Activated CD4-positive, alpha-beta T cell treated with anti-CD3 and anti-CD28 coated beads, Interleukin-2, amount 10 ng/mL, durations not matched to agents 24 days and 14 days (primary cell): ENCODE measurements at regions of chr13 and their contacts with region 1.

Region 1: GRCh38 chr13:99356158-99357091 is 49.2 kb upstream of the GPR183 start:
- DNase-seq: peak; percentile 94
- H3K4me3 Mint-ChIP-seq: peak overlapping the region; percentile 83
- H3K27ac Mint-ChIP-seq: peak overlapping the region; percentile 99
- H3K4me1 Mint-ChIP-seq: peaks cover 92% of the 10 kb centered on the region
- H3K27me3 Mint-ChIP-seq: no peaks in the 10 kb centered on the region

Region 2: GRCh38 chr13:98606296-98606695 is 750.1 kb before region 1 on chr13:
- intact Hi-C with region 1: no loop called
- DNase-seq: no peak
- H3K4me3 Mint-ChIP-seq: no peak overlapping the region
- H3K27ac Mint-ChIP-seq: no peak overlapping the region
- H3K4me1 Mint-ChIP-seq: no peaks in the 10 kb centered on the region
- H3K27me3 Mint-ChIP-seq: peaks cover 7% of the 10 kb centered on the region

Region 3: DNA sequence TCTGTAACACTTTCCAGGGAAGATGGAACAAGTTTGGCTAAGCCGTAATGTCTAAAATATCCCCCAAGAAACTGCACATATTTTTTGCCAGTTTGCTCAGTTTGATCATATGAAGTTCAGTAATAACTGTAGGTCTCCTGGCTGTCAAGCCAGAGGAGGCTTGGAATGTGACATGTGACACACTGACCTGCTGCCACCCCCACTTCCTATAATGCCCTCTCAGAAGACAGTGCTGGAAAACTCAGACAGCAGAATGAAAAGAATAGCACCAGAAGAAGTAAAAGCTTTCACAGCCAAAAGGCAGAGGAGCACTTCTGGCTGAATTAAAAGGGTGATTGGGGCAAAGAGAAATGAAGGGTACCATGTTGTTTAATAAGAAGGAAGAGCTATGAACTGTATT is 223.2 kb before region 1 on chr13:
- intact Hi-C with region 1: no loop called
- DNase-seq: no peak
- H3K4me3 Mint-ChIP-seq: no peak overlapping the region
- H3K27ac Mint-ChIP-seq: no peak overlapping the region
- H3K4me1 Mint-ChIP-seq: no peaks in the 10 kb centered on the region
- H3K27me3 Mint-ChIP-seq: peaks cover 10% of the 10 kb centered on the region

Region 4: GRCh38 chr13:99200432-99201167 is 155.8 kb before region 1 on chr13 and contains the start of gene UBAC2:
- intact Hi-C with region 1: loop called (anchors 2 kb)
- DNase-seq: peak; percentile 99
- H3K4me3 Mint-ChIP-seq: peak within 1 kb of the TSS; percentile 97
- H3K27ac Mint-ChIP-seq: peak within 1 kb of the TSS; percentile 97
- H3K4me1 Mint-ChIP-seq: peaks cover 46% of the 10 kb centered on the region
- H3K27me3 Mint-ChIP-seq: no peaks in the 10 kb centered on the region
- total RNA-seq, gene UBAC2: 52.6 and 52.8 TPM in 2 replicates

Region 5: DNA sequence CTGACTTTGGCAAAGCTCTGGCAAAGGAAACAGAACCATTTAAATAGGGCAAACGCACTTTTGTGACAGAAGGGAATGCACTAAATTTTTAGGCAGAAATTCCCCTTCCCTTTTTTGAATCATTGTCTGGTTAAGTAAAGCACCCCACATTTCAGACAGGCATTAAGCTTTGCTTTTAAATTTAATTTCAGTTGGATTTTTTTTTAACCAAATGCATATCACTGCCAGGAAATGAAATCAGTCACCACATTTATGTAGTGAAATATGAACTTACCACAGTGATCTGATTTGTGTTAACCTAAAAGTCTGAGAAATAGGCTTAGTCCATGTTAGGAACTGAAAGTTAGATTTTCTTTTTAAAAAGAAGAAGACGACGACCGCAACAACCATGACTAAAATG is 60.0 kb before region 1 on chr13:
- intact Hi-C with region 1: loop called (anchors 2 kb)
- DNase-seq: no peak
- H3K4me3 Mint-ChIP-seq: peak overlapping the region; percentile 68
- H3K27ac Mint-ChIP-seq: peak overlapping the region; percentile 79
- H3K4me1 Mint-ChIP-seq: peaks cover 58% of the 10 kb centered on the region
- H3K27me3 Mint-ChIP-seq: no peaks in the 10 kb centered on the region

Region 6: DNA sequence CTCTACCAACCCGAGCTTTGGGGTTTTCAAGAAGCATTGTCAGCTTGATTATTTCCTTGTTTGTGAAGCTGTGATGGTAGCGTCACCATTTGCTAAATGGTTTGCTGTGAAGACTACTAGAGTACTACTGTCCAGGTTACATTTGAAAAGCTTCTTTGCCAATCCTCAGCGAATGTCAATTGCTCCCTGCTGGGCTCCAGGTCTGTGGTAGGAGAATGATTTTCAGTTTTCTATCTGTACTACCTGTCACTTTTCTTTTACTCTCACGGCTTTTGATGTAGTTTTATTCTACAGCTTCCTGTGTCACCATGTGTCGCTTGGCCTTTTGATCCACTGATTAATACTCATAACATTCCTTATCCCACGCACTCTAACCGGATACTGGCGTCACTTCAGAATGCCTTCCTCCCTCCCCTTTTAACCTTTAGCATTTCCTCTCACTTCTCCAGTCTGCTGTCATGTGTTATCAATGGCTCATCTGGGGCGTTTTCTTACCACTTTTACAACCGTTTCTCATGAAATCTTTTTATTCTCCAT is 41.7 kb before region 1 on chr13:
- intact Hi-C with region 1: loop called (anchors 2 kb)
- DNase-seq: peak; percentile 89
- H3K4me3 Mint-ChIP-seq: peak overlapping the region; percentile 76
- H3K27ac Mint-ChIP-seq: peak overlapping the region; percentile 94
- H3K4me1 Mint-ChIP-seq: peaks cover 67% of the 10 kb centered on the region
- H3K27me3 Mint-ChIP-seq: no peaks in the 10 kb centered on the region

Region 7: DNA sequence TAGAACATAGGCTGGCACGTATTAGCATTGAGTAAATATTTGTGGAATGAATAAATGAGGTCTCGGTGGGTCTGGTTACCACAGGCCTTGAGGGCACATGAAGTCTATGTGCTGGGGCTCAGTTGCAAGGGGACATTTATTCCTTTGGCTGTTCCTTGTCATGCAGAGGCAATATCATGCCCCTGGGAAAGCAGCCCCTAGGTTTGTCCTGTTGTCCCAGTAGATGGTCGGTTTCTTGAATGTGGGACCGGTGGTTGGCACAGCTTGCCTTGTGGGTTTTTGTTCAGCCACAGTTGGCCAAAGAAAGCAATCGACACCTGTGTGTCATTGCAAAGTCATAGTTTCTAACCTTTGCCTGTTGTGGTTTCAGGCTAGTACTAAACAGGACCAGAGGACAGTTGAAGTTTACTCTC is 24.5 kb before region 1 on chr13:
- intact Hi-C with region 1: loop called (anchors 1 kb)
- DNase-seq: no peak
- H3K4me3 Mint-ChIP-seq: no peak overlapping the region
- H3K27ac Mint-ChIP-seq: no peak overlapping the region
- H3K4me1 Mint-ChIP-seq: peaks cover 31% of the 10 kb centered on the region
- H3K27me3 Mint-ChIP-seq: no peaks in the 10 kb centered on the region